ENCODE measurements at regions of chr16 and their contacts with region 1.

Region 1: DNA sequence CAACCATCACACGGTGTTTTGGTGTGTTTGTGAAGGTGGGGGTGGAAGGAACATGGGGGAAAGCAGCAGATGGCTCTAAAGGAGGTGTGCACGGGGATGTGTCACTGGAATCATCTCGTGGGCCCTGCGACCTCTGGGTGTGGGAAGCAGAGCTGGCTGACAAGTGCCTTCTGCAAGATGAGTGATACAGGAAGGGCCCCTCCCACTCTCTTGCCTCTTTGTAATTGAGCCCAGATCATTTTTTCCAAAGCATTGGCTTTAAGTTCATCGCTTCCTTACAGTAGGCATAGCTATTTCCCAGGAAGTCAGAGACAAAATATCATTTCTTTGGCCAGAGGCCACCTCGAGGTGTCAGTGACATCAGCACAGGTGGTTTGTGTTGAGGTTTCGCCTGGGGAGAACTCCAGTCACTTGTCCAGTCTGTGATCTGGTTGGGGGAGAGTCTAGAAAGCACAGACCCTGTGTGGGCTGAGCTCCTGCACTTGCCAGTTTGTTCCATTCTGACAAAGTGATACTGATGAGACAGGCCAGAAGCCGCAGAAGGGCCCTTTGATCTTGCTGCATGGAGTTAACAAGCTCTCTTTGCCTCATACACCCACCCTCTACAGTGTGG is 20.6 kb upstream of the SNTB2 start:
- DNase-seq: no peak
- ATAC-seq: no peak

Region 2: GRCh38 chr16:68884861-68885720 is 281.2 kb before region 1 on chr16:
- intact Hi-C with region 1: no loop called
- DNase-seq: no peak
- ATAC-seq: no peak

Region 3: DNA sequence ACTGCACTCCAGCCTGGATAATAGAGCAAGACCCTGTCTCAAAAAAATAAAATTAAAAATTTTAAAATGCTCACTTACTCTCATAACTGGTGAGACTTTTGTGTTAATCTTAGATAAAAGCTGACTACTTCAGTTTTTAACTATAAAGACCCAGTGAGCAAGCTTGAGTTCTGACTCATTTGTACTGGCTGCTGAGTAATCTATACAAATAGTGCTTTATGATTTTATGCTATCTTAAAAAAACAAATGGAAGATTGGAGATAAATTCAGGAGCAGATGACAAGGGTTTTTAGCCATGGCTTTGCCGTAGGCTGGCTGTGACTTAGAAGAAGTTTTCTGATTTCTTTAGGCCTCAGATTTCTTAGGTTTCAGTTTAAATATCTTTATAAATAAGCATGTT is 51.1 kb after region 1 on chr16:
- intact Hi-C with region 1: no loop called
- DNase-seq: no peak
- ATAC-seq: no peak

Region 4: DNA sequence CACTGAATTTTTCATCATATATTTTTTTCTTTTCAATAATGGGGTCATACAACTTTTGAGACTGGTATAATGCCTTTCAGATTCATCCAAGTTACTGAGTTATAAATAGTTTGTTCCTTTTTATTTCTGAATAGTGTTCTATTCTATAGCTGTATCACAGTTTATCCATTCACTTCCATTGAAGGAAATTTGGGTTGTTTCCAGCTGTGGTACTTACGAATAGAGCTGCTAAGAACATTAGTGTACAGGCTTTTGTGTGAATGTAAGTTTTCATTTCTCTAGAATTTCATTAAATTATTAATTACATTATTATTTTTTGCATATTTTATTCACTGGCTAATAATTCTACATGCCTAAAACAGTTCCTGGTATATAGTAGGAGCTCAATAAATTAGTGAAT is 73.5 kb after region 1 on chr16:
- intact Hi-C with region 1: loop called (anchors 10 kb)
- DNase-seq: no peak
- ATAC-seq: no peak

Region 5: GRCh38 chr16:69339289-69340108 is 173.2 kb after region 1 on chr16 and contains the starts of genes COG8 and NIP7:
- intact Hi-C with region 1: no loop called
- DNase-seq: peak; percentile 95
- ATAC-seq: peak; percentile 99
- total RNA-seq, gene COG8: 25.9 TPM
- total RNA-seq, gene NIP7: 8.0 TPM

Region 6: DNA sequence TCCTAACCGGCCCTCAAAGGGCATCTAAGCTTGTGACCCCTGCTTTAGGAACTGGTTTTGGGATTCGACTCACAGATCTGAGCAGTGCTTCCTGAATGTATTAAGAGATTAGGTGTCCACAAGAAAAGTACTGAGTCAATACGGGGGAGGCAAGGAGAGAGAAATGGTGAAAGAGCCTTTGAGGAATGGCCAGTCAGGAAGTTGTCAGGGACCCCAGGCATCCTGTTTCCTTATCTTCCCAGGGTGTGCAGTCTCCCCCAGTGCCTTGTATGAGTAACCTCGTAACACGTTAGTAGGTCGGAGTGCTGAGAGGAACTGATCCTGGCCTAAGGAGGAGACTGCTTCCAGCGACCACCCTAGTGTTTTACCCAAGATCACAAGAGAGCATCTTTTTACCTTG is 201.7 kb after region 1 on chr16:
- intact Hi-C with region 1: no loop called
- DNase-seq: no peak
- ATAC-seq: no peak

Measured in left ventricle myocardium superior (tissue), 1 donor.